Activated B cell treated with CpG ODN at 0.5 μM for 24 hours (primary cell): ENCODE measurements at regions of chr1 and their contacts with region 1.

Region 1: GRCh38 chr1:16167331-16168143 is 11.7 kb upstream of the EPHA2 start:
- DNase-seq: peak; percentile 73
- ATAC-seq: peak; percentile 89
- H3K4me3 Mint-ChIP-seq: peak overlapping the region; percentile 67
- H3K27ac Mint-ChIP-seq: no peak overlapping the region
- H3K4me1 Mint-ChIP-seq: peaks cover 23% of the 10 kb centered on the region
- H3K27me3 Mint-ChIP-seq: peaks cover 6% of the 10 kb centered on the region
- CTCF ChIP-seq: no peak

Region 2: GRCh38 chr1:15835741-15836510 is 331.6 kb before region 1 on chr1:
- CTCF ChIA-PET with region 1: no interaction called
- POLR2A ChIA-PET with region 1: no interaction called
- intact Hi-C with region 1: no loop called
- DNase-seq: peak; percentile 96
- ATAC-seq: peak; percentile 49
- H3K4me3 Mint-ChIP-seq: peak overlapping the region; percentile 90
- H3K27ac Mint-ChIP-seq: peak overlapping the region; percentile 98
- H3K4me1 Mint-ChIP-seq: peaks cover 45% of the 10 kb centered on the region
- H3K27me3 Mint-ChIP-seq: no peaks in the 10 kb centered on the region
- CTCF ChIP-seq: no peak

Region 3: GRCh38 chr1:16055613-16056520 is 111.7 kb before region 1 on chr1:
- CTCF ChIA-PET with region 1: no interaction called
- POLR2A ChIA-PET with region 1: no interaction called
- intact Hi-C with region 1: no loop called
- DNase-seq: peak; percentile 77
- ATAC-seq: peak; percentile 100
- H3K4me3 Mint-ChIP-seq: no peak overlapping the region
- H3K27ac Mint-ChIP-seq: no peak overlapping the region
- H3K4me1 Mint-ChIP-seq: peaks cover 6% of the 10 kb centered on the region
- H3K27me3 Mint-ChIP-seq: peaks cover 6% of the 10 kb centered on the region
- CTCF ChIP-seq: no peak

Region 4: GRCh38 chr1:16155532-16156410 is 11.8 kb before region 1 on chr1 and contains the start of gene EPHA2:
- CTCF ChIA-PET with region 1: no interaction called
- POLR2A ChIA-PET with region 1: no interaction called
- intact Hi-C with region 1: loop called (anchors 2 kb)
- DNase-seq: no peak
- ATAC-seq: peak; percentile 35
- H3K4me3 Mint-ChIP-seq: peak within 1 kb of the TSS; percentile 72
- H3K27ac Mint-ChIP-seq: no peak within 1 kb of the TSS
- H3K4me1 Mint-ChIP-seq: peaks cover 30% of the 10 kb centered on the region
- H3K27me3 Mint-ChIP-seq: peaks cover 15% of the 10 kb centered on the region
- CTCF ChIP-seq: no peak
- total RNA-seq, gene EPHA2: not detected in 2 replicates